Sciatic nerve (tissue), 2 donors: ENCODE measurements at regions of chr2 and their contacts with region 1.

Region 1: DNA sequence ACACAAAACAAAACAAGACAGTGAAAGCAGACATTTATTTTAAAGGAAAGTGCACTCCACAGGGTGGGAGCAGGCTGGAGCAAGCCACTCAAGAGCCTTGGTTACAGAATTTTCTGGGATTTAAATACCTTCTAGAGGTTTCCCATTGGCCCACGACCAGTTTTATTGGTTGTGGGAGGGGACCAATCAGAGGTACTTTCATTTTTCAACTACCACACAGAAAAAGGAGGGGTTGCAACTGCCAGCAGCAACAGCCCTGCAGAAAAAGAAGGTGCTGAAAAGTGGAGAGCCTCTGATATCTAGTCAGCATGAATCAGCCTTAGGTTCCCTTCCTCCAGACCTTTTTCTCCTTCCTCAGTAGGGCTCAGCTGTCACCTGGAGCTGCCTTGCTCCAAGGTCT is 38.8 kb upstream of the SIX3 start:
- DNase-seq: no peak
- ATAC-seq: no peak

Region 2: GRCh38 chr2:45754131-45755010 is 851.6 kb after region 1 on chr2:
- intact Hi-C with region 1: loop called (anchors 5 kb)
- DNase-seq: no peak
- ATAC-seq: peak; percentile 34